Naive thymus-derived CD4-positive, alpha-beta T cell (primary cell): ENCODE measurements at regions of chr6 and their contacts with region 1.

Region 1: GRCh38 chr6:16481697-16482399 is 243.5 kb downstream of the GMPR start:
- DNase-seq: peak in 8 of 9 donors; percentile 51 to 90 (median 83)
- ATAC-seq: peak; percentile 86
- H3K4me3 ChIP-seq: no peak overlapping the region
- H3K4me3 Mint-ChIP-seq: peak overlapping the region in 9 of 10 donors; percentile 1 to 70 (median 46)
- H3K27ac ChIP-seq: peak overlapping the region; percentile 75
- H3K27ac Mint-ChIP-seq: peak overlapping the region; percentile 64 to 96 (median 91)
- H3K4me1 ChIP-seq: peaks cover 33 to 64% of the 10 kb centered on the region in 2 donors
- H3K4me1 Mint-ChIP-seq: peaks cover 29 to 87% (median 56%) of the 10 kb centered on the region in 7 donors
- H3K27me3 ChIP-seq: no peaks in the 10 kb centered on the region
- H3K27me3 Mint-ChIP-seq: no peaks in the 10 kb centered on the region

Region 2: GRCh38 chr6:16319813-16320532 is 161.9 kb before region 1 on chr6:
- CTCF ChIA-PET with region 1: no interaction called
- POLR2A ChIA-PET with region 1: no interaction called
- intact Hi-C with region 1: loop called (anchors 1 to 2 kb)
- DNase-seq: peak; percentile 33 to 91 (median 79)
- ATAC-seq: peak; percentile 70
- H3K4me3 ChIP-seq: peak overlapping the region; percentile 43
- H3K4me3 Mint-ChIP-seq: peak overlapping the region; percentile 67 to 86 (median 78)
- H3K27ac ChIP-seq: peak overlapping the region; percentile 84
- H3K27ac Mint-ChIP-seq: peak overlapping the region; percentile 91 to 97 (median 95)
- H3K4me1 ChIP-seq: peaks cover 58 to 72% of the 10 kb centered on the region in 2 donors
- H3K4me1 Mint-ChIP-seq: peaks cover 41 to 78% (median 74%) of the 10 kb centered on the region in 7 donors
- H3K27me3 ChIP-seq: no peaks in the 10 kb centered on the region
- H3K27me3 Mint-ChIP-seq: no peaks in the 10 kb centered on the region

Region 3: DNA sequence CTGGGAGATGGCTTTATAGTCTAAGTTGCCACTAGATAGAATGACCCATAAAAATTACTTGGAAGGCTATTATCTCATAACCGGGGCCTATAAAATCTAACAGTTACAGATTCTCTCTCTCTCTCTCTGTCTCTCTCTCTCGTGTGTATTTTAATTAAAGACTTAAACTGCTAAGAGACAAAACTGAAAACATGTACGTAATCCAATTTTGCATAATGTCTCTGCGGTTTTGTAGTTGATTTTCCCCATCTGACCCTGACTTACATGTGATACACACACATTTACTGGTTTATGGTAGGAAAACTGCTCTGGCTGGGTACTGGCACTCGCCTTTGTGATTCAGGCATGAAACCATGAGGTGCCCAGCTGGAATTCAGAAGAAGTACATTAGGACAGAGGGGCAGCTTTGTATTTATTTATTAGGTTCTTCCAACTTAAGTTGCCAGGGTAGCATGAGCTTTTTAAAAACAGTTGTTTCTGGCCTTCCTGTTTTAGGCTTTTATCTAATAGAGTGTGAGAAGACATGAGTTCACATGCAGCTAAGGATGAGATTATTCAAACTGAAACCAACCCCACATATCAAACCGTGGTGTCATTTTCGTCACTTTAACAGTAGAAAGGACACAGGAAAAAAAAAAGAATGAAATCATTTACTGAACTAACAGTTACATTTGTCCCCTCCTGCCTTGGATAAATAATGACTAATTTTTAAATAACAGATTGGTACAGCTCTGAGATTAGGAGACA is 61.0 kb before region 1 on chr6:
- CTCF ChIA-PET with region 1: no interaction called
- POLR2A ChIA-PET with region 1: no interaction called
- intact Hi-C with region 1: loop called (anchors 1 to 5 kb)
- DNase-seq: peak in 7 of 9 donors; percentile 22 to 52 (median 34)
- ATAC-seq: peak; percentile 80
- H3K4me3 ChIP-seq: peak overlapping the region; percentile 31
- H3K4me3 Mint-ChIP-seq: peak overlapping the region in 9 of 10 donors; percentile 59 to 84 (median 69)
- H3K27ac ChIP-seq: peak overlapping the region; percentile 70
- H3K27ac Mint-ChIP-seq: peak overlapping the region; percentile 72 to 99 (median 92)
- H3K4me1 ChIP-seq: peaks cover 16 to 31% of the 10 kb centered on the region in 2 donors
- H3K4me1 Mint-ChIP-seq: peaks cover 16 to 60% (median 37%) of the 10 kb centered on the region in 7 donors
- H3K27me3 ChIP-seq: no peaks in the 10 kb centered on the region
- H3K27me3 Mint-ChIP-seq: no peaks in the 10 kb centered on the region

Region 4: DNA sequence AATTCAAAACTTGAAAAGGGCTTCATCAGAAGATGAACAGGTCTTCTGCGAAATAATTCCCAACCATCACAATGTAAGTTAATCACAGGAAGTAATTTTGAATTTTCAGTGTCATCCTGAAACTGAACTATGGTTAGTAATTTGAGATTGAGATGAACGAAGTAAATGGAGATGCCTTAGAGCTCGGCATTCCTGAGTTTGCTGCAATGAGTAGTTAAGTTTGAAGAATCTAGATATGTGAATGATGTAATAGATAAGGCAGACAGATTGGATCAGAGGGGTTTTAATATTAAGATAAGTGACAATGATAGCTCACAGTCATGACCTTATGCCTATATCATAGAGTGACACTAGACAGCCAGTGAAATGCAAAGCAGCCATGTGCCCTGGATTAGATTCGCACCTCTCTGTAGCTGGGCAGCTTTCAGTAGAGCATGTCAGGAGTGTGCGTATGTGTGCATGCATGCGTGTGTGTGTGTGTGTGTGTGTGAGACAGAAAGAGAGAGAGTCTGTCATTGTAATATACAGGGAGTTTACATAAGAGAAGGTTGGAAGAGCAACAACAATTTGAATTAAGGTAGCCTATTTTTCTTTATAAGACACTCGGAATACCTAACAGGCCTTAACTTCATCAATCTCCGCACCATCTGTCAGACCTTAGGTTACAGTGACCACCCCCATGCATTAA is 10.5 kb before region 1 on chr6:
- CTCF ChIA-PET with region 1: no interaction called
- POLR2A ChIA-PET with region 1: interaction called, 3 read pairs
- intact Hi-C with region 1: loop called (anchors 1 kb)
- DNase-seq: no peak
- ATAC-seq: no peak
- H3K4me3 ChIP-seq: no peak overlapping the region
- H3K4me3 Mint-ChIP-seq: peak overlapping the region in 1 of 10 donors; percentile 43
- H3K27ac ChIP-seq: no peak overlapping the region
- H3K27ac Mint-ChIP-seq: peak overlapping the region in 5 of 9 donors; percentile 6 to 68 (median 22)
- H3K4me1 ChIP-seq: peaks cover 25 to 48% of the 10 kb centered on the region in 2 donors
- H3K4me1 Mint-ChIP-seq: peaks cover 23 to 70% (median 37%) of the 10 kb centered on the region in 7 donors
- H3K27me3 ChIP-seq: no peaks in the 10 kb centered on the region
- H3K27me3 Mint-ChIP-seq: no peaks in the 10 kb centered on the region

Region 5: DNA sequence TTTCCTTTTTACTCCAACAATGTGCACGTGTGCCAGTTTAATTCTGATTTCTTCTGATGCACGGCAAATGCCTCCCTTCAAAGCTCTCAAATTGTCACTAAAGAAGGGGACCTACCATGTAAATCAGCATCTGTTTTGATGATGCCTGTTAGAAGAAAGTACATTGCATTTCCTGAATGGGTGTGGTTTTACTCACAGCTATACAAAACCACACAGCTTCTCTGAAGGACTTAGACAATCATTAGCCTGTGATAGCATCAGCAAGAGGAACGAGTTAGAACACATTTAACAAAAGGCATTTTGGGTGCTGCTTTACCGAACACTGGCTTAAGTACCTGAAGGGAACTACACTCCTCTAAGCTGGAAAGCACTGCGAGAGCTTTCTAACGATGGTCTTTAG is 170.0 kb after region 1 on chr6:
- CTCF ChIA-PET with region 1: no interaction called
- POLR2A ChIA-PET with region 1: no interaction called
- intact Hi-C with region 1: loop called in 1 of 2 experiments (anchors 5 kb)
- DNase-seq: peak in 7 of 9 donors; percentile 4 to 55 (median 27)
- ATAC-seq: peak; percentile 88
- H3K4me3 ChIP-seq: no peak overlapping the region
- H3K4me3 Mint-ChIP-seq: peak overlapping the region in 3 of 10 donors; percentile 33 to 68 (median 41)
- H3K27ac ChIP-seq: no peak overlapping the region
- H3K27ac Mint-ChIP-seq: peak overlapping the region in 5 of 9 donors; percentile 0 to 86 (median 12)
- H3K4me1 ChIP-seq: peaks cover 11 to 48% of the 10 kb centered on the region in 2 donors
- H3K4me1 Mint-ChIP-seq: peaks cover 20 to 63% (median 24%) of the 10 kb centered on the region in 7 donors
- H3K27me3 ChIP-seq: no peaks in the 10 kb centered on the region
- H3K27me3 Mint-ChIP-seq: no peaks in the 10 kb centered on the region

Region 6: DNA sequence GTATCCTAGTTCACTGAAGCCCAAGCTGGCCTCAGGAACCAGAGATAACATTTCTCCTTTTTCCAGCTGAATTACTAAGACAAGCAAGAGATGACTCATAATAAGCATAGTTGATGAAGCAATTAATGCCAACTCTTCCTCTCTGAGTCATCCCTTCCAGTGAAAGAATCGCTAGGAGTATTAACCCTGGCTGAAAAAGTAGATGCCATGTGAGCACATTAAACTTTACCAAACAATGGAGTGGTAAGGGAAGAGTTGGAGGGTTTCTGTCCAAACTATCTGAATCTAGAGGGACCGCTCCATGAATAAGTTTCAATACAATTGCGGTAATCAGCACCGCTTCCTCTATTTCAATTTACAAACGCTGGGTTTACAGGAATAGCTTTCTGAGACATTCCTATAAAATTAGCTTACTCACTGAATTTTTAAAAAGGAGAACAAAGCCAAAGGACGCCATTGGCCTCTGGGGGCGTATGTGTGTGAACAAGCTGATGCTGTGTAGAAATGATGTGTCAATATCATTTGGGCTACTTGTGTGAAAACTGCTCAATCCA is 231.2 kb after region 1 on chr6:
- CTCF ChIA-PET with region 1: no interaction called
- POLR2A ChIA-PET with region 1: no interaction called
- intact Hi-C with region 1: loop called in 1 of 2 experiments (anchors 5 kb)
- DNase-seq: no peak
- ATAC-seq: peak; percentile 70
- H3K4me3 ChIP-seq: peak overlapping the region; percentile 3
- H3K4me3 Mint-ChIP-seq: peak overlapping the region in 7 of 10 donors; percentile 12 to 79 (median 56)
- H3K27ac ChIP-seq: no peak overlapping the region
- H3K27ac Mint-ChIP-seq: peak overlapping the region in 5 of 9 donors; percentile 52 to 85 (median 67)
- H3K4me1 ChIP-seq: peaks cover 0 to 18% of the 10 kb centered on the region in 2 donors
- H3K4me1 Mint-ChIP-seq: peaks cover 11 to 54% (median 22%) of the 10 kb centered on the region in 7 donors
- H3K27me3 ChIP-seq: no peaks in the 10 kb centered on the region
- H3K27me3 Mint-ChIP-seq: no peaks in the 10 kb centered on the region

Region 7: GRCh38 chr6:17706580-17707370 is 1224.9 kb after region 1 on chr6 and contains the start of gene NUP153:
- CTCF ChIA-PET with region 1: no interaction called
- POLR2A ChIA-PET with region 1: no interaction called
- intact Hi-C with region 1: loop called in 1 of 2 experiments (anchors 5 kb)
- DNase-seq: peak; percentile 98 to 100 (median 99)
- ATAC-seq: peak; percentile 85
- H3K4me3 ChIP-seq: peak within 1 kb of the TSS; percentile 94
- H3K4me3 Mint-ChIP-seq: peak within 1 kb of the TSS; percentile 86 to 97 (median 94)
- H3K27ac ChIP-seq: peak within 1 kb of the TSS; percentile 100
- H3K27ac Mint-ChIP-seq: peak within 1 kb of the TSS; percentile 92 to 98 (median 95)
- H3K4me1 ChIP-seq: peaks cover 24 to 28% of the 10 kb centered on the region in 2 donors
- H3K4me1 Mint-ChIP-seq: peaks cover 13 to 53% (median 37%) of the 10 kb centered on the region in 7 donors
- H3K27me3 ChIP-seq: no peaks in the 10 kb centered on the region
- H3K27me3 Mint-ChIP-seq: peaks cover 0 to 2% (median 0%) of the 10 kb centered on the region in 5 donors
- total RNA-seq, gene NUP153: 47.7 to 90.9 (median 53.0) TPM